GM12878 (cell line): ENCODE measurements at regions of chr5 and their contacts with region 1.

Region 1: GRCh38 chr5:136249678-136250266 is 56.8 kb upstream of the SMIM32 start:
- DNase-seq: no peak
- ATAC-seq: peak; percentile 89
- H3K4me3 ChIP-seq: no peak overlapping the region
- H3K27ac ChIP-seq: no peak overlapping the region
- H3K4me1 ChIP-seq: no peaks in the 10 kb centered on the region
- H3K27me3 ChIP-seq: no peaks in the 10 kb centered on the region; a peak in 2 of 4 replicates
- CTCF ChIP-seq: peak; percentile 82 to 92 (median 86)
- EP300 ChIP-seq: no peak
- POLR2A ChIP-seq: no peak
- RAD21 ChIP-seq: peak; percentile 81

Region 2: GRCh38 chr5:136276946-136277345 is 27.2 kb after region 1 on chr5:
- CTCF ChIA-PET with region 1: interaction called, 26 read pairs
- POLR2A ChIA-PET with region 1: no interaction called
- RAD21 ChIA-PET with region 1: interaction called, 4 read pairs
- SMC1A ChIA-PET with region 1: interaction called, 11 read pairs
- in situ Hi-C with region 1: no loop called
- intact Hi-C with region 1: no loop called
- DNase-seq: no peak
- ATAC-seq: no peak
- H3K4me3 ChIP-seq: no peak overlapping the region
- H3K27ac ChIP-seq: no peak overlapping the region
- H3K4me1 ChIP-seq: no peaks in the 10 kb centered on the region
- H3K27me3 ChIP-seq: no peaks in the 10 kb centered on the region; a peak in 2 of 4 replicates
- CTCF ChIP-seq: no peak
- EP300 ChIP-seq: no peak
- POLR2A ChIP-seq: no peak
- RAD21 ChIP-seq: no peak

Region 3: DNA sequence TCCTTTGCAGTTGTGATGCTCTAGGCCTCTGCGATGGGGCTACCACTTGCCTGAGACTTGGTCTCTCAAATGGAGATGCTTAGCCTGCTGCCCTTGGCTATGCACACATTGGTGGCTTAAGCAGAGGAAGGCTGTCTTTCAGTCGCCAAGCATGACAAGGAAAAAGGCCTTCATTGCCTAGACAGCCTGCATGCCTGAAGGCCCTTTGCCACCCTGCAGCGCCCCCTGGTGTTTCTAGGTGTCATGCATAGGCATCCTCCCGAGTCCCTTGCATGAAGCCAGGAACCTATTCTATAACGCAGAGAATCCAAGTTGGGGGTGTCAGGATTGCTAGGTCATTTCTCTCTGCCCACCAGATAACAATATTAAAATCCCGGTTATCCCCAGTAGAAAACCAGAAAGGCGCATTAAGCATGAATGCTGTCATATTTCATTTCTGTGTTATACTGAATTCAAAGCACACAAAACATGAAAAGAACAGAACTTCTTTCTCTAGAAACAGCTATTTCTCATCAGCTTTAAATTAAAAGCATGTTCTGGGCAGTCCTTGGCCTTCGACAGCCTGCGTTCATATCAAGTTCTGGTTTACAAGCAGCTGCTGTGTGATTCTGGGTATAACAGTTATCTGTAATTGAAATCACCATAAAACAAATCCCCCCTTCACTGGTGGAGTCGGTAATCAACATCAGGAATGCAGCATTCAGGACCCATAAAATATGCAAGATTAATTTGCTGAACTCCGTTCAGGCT is 175.2 kb after region 1 on chr5:
- CTCF ChIA-PET with region 1: interaction called, 34 read pairs
- POLR2A ChIA-PET with region 1: no interaction called
- RAD21 ChIA-PET with region 1: interaction called, 17 read pairs
- SMC1A ChIA-PET with region 1: interaction called, 15 read pairs
- in situ Hi-C with region 1: loop called (anchors 5 kb)
- intact Hi-C with region 1: loop called (anchors 1 kb)
- DNase-seq: no peak
- ATAC-seq: peak; percentile 98
- H3K4me3 ChIP-seq: no peak overlapping the region
- H3K27ac ChIP-seq: no peak overlapping the region
- H3K4me1 ChIP-seq: no peaks in the 10 kb centered on the region
- H3K27me3 ChIP-seq: no peaks in the 10 kb centered on the region
- CTCF ChIP-seq: peak; percentile 77 to 86 (median 86)
- EP300 ChIP-seq: no peak
- POLR2A ChIP-seq: no peak
- RAD21 ChIP-seq: peak; percentile 75

Region 4: GRCh38 chr5:136686192-136686872 is 436.6 kb after region 1 on chr5:
- CTCF ChIA-PET with region 1: interaction called, 18 read pairs
- POLR2A ChIA-PET with region 1: no interaction called
- RAD21 ChIA-PET with region 1: no interaction called
- SMC1A ChIA-PET with region 1: no interaction called
- in situ Hi-C with region 1: no loop called
- intact Hi-C with region 1: loop called (anchors 10 kb)
- DNase-seq: no peak
- ATAC-seq: peak; percentile 70
- H3K4me3 ChIP-seq: no peak overlapping the region
- H3K27ac ChIP-seq: no peak overlapping the region
- H3K4me1 ChIP-seq: no peaks in the 10 kb centered on the region
- H3K27me3 ChIP-seq: no peaks in the 10 kb centered on the region
- CTCF ChIP-seq: peak; percentile 19 to 41 (median 36); a peak in 4 of 6 replicates
- EP300 ChIP-seq: no peak
- POLR2A ChIP-seq: no peak
- RAD21 ChIP-seq: peak; percentile 43